Left colon (tissue), 2 donors: ENCODE measurements at regions of chr10 and their contacts with region 1.

Region 1: DNA sequence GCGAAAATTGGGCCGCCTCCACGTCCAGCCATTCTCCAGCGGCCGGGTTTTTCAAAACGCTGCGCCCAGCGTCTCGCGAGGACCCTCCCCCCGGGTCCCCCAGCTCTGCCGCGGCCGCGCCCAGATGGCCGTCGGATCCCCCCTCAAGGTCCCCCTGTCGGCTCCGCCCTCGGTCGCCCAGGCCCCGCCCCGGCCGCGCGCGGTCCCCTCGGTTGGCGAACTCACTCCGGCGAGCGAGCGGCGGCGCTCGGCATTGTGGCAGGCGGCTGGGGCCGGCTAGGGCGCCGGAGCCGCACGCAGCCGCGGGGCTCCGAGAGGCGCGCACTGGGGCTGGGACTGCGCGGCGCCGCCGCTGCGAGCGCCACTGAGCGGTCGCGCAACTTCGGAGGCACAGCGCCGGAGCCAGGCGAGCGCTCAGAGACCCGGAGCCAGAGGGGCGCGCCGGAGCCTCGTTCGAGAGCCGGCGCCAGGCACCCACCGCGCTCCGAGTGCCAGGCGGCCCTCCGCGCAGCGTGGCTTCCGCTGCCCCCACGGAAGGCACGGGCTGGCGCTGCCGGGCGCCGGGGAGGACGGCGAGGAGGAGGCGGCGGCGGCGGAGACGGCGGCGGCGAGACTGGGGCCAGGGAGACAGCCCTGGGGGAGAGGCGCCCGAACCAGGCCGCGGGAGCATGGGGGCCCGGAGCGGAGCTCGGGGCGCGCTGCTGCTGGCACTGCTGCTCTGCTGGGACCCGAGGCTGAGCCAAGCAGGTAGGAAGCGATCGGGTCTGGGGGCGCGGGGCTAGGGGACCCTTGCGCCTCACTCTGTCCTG is at the start of gene UNC5B:
- DNase-seq: peak; percentile 85 to 91
- ATAC-seq: peak; percentile 80
- total RNA-seq, gene UNC5B: 19.4 to 32.4 TPM

Region 2: DNA sequence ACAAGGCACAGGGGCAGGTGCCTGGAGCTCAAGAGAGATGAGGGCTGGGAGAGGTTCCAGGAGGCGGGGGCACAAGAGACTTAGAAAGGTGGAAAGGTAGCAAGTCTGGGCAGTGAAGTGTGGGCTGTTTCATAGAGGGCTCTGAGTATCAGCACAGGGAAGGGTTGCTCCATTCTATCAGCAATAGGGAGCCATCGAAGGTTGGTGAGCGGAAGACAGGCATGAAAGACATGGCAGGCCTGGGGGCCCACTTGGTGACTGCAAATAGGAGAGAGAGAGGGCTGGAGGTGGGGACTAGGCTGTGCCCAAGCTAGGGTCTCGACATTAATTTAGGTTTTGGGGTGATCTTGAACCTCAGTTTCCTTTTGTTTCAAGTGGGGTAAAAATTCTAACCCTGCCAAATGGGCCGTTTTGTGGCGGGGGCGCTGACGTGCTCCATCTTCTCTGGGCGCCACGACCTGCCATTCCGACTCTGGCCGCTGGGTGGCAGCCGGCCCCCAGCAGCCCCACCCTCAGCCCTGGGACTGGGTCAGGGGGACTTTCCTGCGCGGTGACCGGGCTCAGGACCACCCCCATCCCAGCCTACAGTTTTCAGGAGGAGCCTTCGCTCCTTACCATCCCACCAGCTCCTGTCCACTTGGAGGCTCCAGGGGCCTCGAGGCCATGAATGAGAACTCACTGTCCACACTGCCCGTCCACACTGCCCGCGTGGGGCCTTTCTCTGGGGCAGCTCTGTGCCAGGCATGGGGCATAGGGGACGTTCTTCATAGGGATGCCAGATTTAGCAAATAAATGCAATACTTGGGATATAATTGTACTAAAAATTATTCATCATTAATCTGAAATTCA is 286.9 kb before region 1 on chr10:
- intact Hi-C with region 1: loop called (anchors 5 to 10 kb)
- DNase-seq: peak in 1 of 2 donors; percentile 57
- ATAC-seq: peak; percentile 64

Region 3: DNA sequence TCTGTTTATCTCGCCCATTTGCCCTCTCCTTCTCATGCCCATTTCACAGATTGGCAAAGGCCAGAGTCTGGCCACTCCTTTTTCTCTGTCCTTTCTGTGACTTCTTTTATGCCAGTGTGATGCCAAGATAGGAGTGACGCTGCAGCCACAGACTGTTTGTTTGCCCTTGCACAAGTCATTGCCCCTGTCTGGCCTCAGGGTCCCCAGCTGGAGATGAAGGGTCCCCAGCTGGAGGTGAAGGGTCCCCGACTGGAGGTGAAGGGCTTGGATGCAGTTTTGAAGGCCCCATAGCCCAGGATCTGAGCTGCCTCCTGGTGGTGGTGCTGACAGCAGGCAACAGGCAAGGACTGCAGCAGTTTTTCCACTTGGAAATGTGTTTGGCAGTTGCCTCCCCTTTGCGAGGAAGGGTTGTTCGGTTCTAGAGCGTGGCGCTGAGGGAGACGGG is 55.7 kb after region 1 on chr10:
- intact Hi-C with region 1: loop called in 1 of 2 experiments (anchors 10 kb)
- DNase-seq: no peak
- ATAC-seq: peak; percentile 19

Region 4: GRCh38 chr10:71285180-71285545 is 72.6 kb after region 1 on chr10:
- intact Hi-C with region 1: loop called in 1 of 2 experiments (anchors 5 kb)
- DNase-seq: peak in 1 of 2 donors; percentile 48
- ATAC-seq: peak; percentile 76